ENCODE measurements at regions of chr1 and their contacts with region 1.

Region 1: GRCh38 chr1:244864253-244865027 is at the start of gene HNRNPU:
- DNase-seq: peak; percentile 95
- H3K4me3 Mint-ChIP-seq: peak within 1 kb of the TSS; percentile 90
- H3K27ac Mint-ChIP-seq: peak within 1 kb of the TSS; percentile 99
- H3K4me1 Mint-ChIP-seq: peaks cover 31% of the 10 kb centered on the region
- H3K27me3 Mint-ChIP-seq: no peaks in the 10 kb centered on the region
- total RNA-seq, gene HNRNPU: 331 to 338 TPM

Region 2: GRCh38 chr1:244652699-244653466 is 211.6 kb before region 1 on chr1 and contains the start of gene DESI2:
- CTCF ChIA-PET with region 1: no interaction called
- intact Hi-C with region 1: loop called (anchors 1 kb)
- DNase-seq: peak; percentile 99
- H3K4me3 Mint-ChIP-seq: peak within 1 kb of the TSS; percentile 82
- H3K27ac Mint-ChIP-seq: peak within 1 kb of the TSS; percentile 88
- H3K4me1 Mint-ChIP-seq: peaks cover 18% of the 10 kb centered on the region
- H3K27me3 Mint-ChIP-seq: no peaks in the 10 kb centered on the region
- total RNA-seq, gene DESI2: 31.7 to 32.5 TPM

Region 3: GRCh38 chr1:244788493-244789275 is 75.8 kb before region 1 on chr1:
- CTCF ChIA-PET with region 1: no interaction called
- intact Hi-C with region 1: no loop called
- DNase-seq: no peak
- H3K4me3 Mint-ChIP-seq: no peak overlapping the region
- H3K27ac Mint-ChIP-seq: no peak overlapping the region
- H3K4me1 Mint-ChIP-seq: no peaks in the 10 kb centered on the region
- H3K27me3 Mint-ChIP-seq: no peaks in the 10 kb centered on the region

Region 4: DNA sequence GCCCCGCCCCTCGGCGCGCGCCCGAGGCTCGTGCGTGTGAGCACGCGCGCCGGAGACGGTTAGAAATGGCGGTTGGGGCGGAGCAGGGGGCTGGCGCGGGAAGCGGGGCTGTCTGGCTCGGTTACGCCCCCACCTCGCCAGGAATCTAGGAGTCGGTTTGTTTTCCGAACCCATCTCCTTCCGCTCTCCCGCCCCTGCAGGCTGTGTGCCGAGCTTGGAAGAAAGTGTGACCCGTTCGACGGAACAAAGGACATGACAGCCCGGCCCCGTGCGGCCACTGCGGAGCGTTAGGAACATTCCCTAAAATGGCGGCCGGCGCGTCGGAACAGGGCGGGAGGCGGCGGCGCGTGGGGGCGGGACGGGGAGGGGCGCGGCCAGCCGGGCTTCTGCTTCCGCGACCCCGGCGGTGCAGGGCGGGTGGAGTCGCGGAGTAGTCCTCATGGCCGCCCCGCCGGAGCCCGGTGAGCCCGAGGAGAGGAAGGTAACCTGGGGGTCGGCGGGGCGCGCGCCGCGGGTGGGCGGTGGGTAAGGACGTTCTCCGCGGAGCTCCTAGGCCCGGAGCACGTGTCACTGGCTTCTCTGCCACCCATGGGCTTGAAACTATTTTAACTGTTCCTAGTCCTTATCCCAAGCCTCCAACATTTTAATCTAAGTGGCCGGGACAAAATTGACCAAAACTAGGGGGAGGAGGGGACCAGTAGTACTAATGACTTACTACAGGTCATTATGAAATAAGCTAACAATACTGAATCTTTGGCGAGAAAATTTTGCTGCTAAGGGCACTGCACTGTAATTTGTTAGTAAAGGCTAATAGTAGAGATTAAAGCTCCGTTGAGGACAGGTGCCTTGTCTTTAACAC is 28.9 kb before region 1 on chr1 and contains the start of gene COX20:
- CTCF ChIA-PET with region 1: interaction called, 10 read pairs
- intact Hi-C with region 1: loop called (anchors 1 kb)
- DNase-seq: peak; percentile 85
- H3K4me3 Mint-ChIP-seq: peak within 1 kb of the TSS; percentile 94
- H3K27ac Mint-ChIP-seq: peak within 1 kb of the TSS; percentile 99
- H3K4me1 Mint-ChIP-seq: peaks cover 38% of the 10 kb centered on the region
- H3K27me3 Mint-ChIP-seq: no peaks in the 10 kb centered on the region
- total RNA-seq, gene COX20: 21.4 to 24.2 TPM

Region 5: DNA sequence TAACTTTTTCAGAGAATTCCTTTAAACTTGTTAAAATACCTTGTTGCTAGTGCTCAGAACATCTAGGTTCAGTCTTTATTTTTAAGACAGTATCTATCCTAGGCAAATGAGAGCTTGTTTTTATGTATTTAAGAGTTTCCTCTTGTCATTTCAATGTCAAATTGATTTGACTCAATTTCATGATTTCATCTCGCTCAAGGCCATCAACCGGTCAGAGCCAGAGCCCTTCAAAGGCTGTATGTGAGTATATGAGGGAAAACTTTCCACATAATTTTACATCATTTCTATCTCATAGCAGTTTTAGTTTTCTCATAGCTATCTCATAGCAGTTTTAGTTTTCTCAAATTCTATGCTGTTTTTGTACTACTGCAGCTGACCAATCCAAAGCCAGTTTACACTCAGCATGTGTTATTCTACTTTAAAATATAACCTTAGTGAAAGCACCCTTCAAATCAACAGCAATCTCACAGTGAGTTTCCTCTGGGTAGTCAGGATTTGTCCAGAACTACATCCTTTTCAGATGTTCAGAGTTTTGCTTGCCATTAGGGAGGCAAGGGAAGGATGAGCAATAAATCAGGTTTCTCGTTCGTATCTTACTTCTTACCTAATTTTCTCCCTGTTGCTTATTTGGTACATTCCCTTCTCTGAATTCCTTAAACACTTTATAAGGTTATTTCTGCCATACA is 12.8 kb before region 1 on chr1:
- CTCF ChIA-PET with region 1: interaction called, 15 read pairs
- intact Hi-C with region 1: loop called (anchors 1 kb)
- DNase-seq: no peak
- H3K4me3 Mint-ChIP-seq: no peak overlapping the region
- H3K27ac Mint-ChIP-seq: peak overlapping the region; percentile 76
- H3K4me1 Mint-ChIP-seq: peaks cover 74% of the 10 kb centered on the region
- H3K27me3 Mint-ChIP-seq: no peaks in the 10 kb centered on the region

Region 6: GRCh38 chr1:244970661-244971551 is 106.5 kb after region 1 on chr1:
- CTCF ChIA-PET with region 1: interaction called, 4 read pairs
- intact Hi-C with region 1: loop called (anchors 1 kb)
- DNase-seq: peak; percentile 93
- H3K4me3 Mint-ChIP-seq: peak overlapping the region; percentile 93
- H3K27ac Mint-ChIP-seq: peak overlapping the region; percentile 98
- H3K4me1 Mint-ChIP-seq: peaks cover 11% of the 10 kb centered on the region
- H3K27me3 Mint-ChIP-seq: no peaks in the 10 kb centered on the region

Region 7: GRCh38 chr1:245953876-245954660 is 1089.6 kb after region 1 on chr1:
- CTCF ChIA-PET with region 1: no interaction called
- intact Hi-C with region 1: loop called (anchors 10 kb)
- DNase-seq: peak; percentile 17
- H3K4me3 Mint-ChIP-seq: peak overlapping the region; percentile 54
- H3K27ac Mint-ChIP-seq: peak overlapping the region; percentile 87
- H3K4me1 Mint-ChIP-seq: peaks cover 27% of the 10 kb centered on the region
- H3K27me3 Mint-ChIP-seq: no peaks in the 10 kb centered on the region

Measured in activated naive CD4-positive, alpha-beta T cell treated with anti-CD3 and anti-CD28 coated beads for 36 hours (primary cell).